ENCODE measurements at regions of chr2 and their contacts with region 1.

Region 1: GRCh38 chr2:54657664-54658083 is 65.8 kb upstream of the EML6 start:
- DNase-seq: peak in 1 of 2 experiments; percentile 65
- H3K4me3 ChIP-seq: no peak overlapping the region
- H3K27ac ChIP-seq: no peak overlapping the region
- H3K4me1 ChIP-seq: no peaks in the 10 kb centered on the region
- H3K27me3 ChIP-seq: no peaks in the 10 kb centered on the region
- CTCF ChIP-seq: peak; percentile 50 to 73 (median 57)
- EP300 ChIP-seq: no peak
- POLR2A ChIP-seq: no peak
- RAD21 ChIP-seq: peak; percentile 57 to 61

Region 2: DNA sequence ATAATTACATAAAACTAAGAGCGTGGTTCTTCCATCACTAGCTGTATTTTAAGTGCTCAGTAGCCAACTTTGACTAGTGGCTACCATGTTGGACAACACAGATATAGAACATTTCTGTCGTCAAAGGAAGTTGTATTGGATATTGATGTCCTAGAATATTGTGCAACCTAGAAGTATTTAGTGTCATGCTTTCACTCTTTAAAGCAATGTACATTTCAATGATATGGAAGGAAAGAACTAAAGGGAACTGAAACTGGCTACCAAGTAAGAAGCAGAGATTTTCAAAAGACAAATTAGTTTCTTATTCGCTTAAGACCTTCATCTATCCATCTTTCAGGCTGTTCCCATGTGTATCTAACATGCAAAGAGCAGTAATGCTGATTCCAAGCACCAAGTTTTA is 19.6 kb before region 1 on chr2:
- CTCF ChIA-PET with region 1: interaction called, 15 read pairs
- POLR2A ChIA-PET with region 1: no interaction called
- DNase-seq: no peak
- H3K4me3 ChIP-seq: no peak overlapping the region
- H3K27ac ChIP-seq: no peak overlapping the region
- H3K4me1 ChIP-seq: peaks cover 0 to 3% (median 0%) of the 10 kb centered on the region in 4 experiments; a peak in 1 of 7 replicates
- H3K27me3 ChIP-seq: no peaks in the 10 kb centered on the region
- CTCF ChIP-seq: no peak
- EP300 ChIP-seq: no peak
- POLR2A ChIP-seq: no peak
- RAD21 ChIP-seq: no peak

Region 3: DNA sequence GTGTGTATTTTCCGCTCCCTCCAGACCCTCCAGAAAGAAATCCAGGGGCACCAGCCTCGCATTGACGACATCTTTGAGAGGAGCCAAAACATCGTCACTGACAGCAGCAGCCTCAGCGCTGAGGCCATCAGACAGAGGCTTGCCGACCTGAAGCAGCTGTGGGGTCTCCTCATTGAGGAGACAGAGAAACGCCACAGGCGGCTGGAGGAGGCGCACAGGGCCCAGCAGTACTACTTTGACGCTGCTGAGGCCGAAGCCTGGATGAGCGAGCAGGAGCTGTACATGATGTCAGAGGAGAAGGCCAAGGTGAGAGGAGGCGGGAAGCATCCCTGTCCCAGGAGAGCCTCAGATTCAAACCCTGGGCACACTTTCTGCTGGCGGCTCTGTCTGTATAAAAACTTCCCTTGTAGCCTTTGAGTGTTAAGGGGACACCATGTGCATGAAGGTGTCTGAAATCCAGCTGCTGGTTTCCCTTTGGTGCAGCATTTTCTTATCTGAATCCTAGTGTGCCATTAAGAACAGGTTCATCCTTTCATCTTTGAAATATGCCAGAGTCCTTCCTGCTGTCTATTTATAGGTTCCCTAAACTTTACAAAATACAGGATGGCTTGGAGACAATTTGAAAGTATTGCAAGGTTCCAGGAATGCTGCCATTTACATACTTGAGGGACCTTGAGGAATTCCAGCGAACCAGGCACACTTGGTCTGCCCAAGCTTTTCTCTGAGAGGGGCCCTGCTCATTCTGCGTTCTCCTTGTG is 11.3 kb before region 1 on chr2:
- CTCF ChIA-PET with region 1: interaction called, 24 read pairs
- POLR2A ChIA-PET with region 1: interaction called, 3 read pairs
- DNase-seq: no peak
- H3K4me3 ChIP-seq: no peak overlapping the region
- H3K27ac ChIP-seq: no peak overlapping the region
- H3K4me1 ChIP-seq: no peaks in the 10 kb centered on the region
- H3K27me3 ChIP-seq: no peaks in the 10 kb centered on the region
- CTCF ChIP-seq: no peak
- EP300 ChIP-seq: no peak
- POLR2A ChIP-seq: no peak
- RAD21 ChIP-seq: no peak

Region 4: DNA sequence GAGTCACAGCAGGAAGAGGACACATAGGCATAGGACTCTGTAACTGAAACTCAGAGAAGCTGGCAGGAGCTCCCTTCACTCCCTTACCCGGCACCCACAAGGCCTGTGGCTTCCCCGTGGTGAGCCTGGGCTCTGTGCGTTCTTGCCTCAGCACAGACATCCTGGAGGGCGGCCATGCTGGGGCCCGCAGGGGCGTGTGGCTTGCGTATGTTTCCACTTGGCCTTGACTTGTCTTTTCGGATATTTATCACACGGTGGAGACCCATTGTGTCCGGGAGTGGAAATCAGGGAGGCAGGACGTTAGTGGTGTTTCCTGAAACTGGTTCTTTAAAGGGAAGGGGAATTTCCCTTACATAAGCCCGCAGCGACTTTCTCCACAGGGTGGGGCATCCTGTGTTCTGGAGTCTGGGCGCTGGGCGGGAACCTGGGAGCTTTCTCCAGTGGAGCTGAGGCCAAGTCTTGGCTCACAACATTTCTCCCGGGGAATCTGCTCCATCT is 15.9 kb after region 1 on chr2:
- CTCF ChIA-PET with region 1: interaction called, 138 read pairs
- POLR2A ChIA-PET with region 1: no interaction called
- DNase-seq: peak in 1 of 2 experiments; percentile 45
- H3K4me3 ChIP-seq: no peak overlapping the region
- H3K27ac ChIP-seq: no peak overlapping the region
- H3K4me1 ChIP-seq: peaks cover 0 to 3% (median 0%) of the 10 kb centered on the region in 4 experiments; a peak in 3 of 7 replicates
- H3K27me3 ChIP-seq: no peaks in the 10 kb centered on the region
- CTCF ChIP-seq: no peak
- EP300 ChIP-seq: no peak
- POLR2A ChIP-seq: no peak
- RAD21 ChIP-seq: no peak

Region 5: DNA sequence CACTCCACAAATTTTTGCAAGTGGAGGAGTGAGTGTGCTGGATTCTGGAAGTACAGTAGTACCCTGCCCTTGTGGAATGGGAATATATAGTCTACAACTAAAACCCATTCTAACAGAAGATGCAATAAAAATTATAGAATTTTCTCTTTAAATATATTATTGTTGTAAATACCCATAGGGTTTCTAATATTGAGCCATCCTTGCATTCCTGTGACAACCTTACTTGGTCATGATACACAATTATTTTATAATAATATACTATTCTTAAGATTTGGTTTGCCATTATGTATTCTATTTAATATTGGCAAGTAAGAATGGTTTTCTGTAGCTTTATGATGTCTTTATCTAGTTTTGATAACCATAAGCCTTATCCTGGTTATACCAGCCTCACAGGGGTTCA is 118.0 kb after region 1 on chr2:
- CTCF ChIA-PET with region 1: no interaction called
- POLR2A ChIA-PET with region 1: no interaction called
- DNase-seq: no peak
- H3K4me3 ChIP-seq: no peak overlapping the region
- H3K27ac ChIP-seq: no peak overlapping the region
- H3K4me1 ChIP-seq: no peaks in the 10 kb centered on the region
- H3K27me3 ChIP-seq: no peaks in the 10 kb centered on the region
- CTCF ChIP-seq: no peak
- EP300 ChIP-seq: no peak
- POLR2A ChIP-seq: no peak
- RAD21 ChIP-seq: no peak

Region 6: DNA sequence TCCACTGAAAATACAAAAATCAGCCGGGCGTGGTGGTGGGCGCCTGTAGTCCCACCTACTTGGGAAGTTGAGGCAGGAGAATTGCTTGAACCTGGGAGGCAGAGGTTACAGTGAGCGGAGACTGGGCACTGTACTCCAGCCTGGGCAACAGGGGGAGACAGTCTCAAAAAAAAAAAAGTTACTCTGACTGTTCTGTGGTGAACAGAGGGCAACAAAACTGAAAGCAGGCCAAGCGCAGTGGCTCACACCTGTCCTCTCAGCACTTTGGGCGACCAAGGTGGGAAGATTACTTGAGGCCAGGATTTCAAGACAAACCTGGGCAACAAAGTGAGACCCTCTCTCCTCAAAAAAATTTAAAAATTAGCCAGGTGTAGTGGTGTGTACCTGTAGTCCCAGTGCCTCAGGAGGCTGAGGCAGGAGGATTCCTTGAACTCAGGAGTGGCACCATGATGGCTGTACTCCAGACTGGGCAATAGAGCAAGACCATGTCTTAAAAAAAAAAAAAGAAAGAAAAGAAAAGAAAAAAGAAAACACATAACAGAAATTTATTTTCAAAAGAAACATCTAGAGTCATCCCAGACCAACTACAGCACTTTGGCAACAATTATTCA is 406.1 kb after region 1 on chr2:
- CTCF ChIA-PET with region 1: no interaction called
- POLR2A ChIA-PET with region 1: no interaction called
- DNase-seq: no peak
- H3K4me3 ChIP-seq: no peak overlapping the region
- H3K27ac ChIP-seq: no peak overlapping the region
- H3K4me1 ChIP-seq: no peaks in the 10 kb centered on the region
- H3K27me3 ChIP-seq: no peaks in the 10 kb centered on the region
- CTCF ChIP-seq: peak; percentile 27 to 43 (median 35); a peak in 3 of 4 replicates
- EP300 ChIP-seq: no peak
- POLR2A ChIP-seq: no peak
- RAD21 ChIP-seq: peak; percentile 47 to 63

Measured in H1 (cell line).